Naive thymus-derived CD4-positive, alpha-beta T cell (primary cell): ENCODE measurements at regions of chr3 and their contacts with region 1.

Region 1: GRCh38 chr3:27914199-27914598 is 192.1 kb upstream of the EOMES start:
- DNase-seq: no peak
- ATAC-seq: no peak
- H3K4me3 ChIP-seq: no peak overlapping the region
- H3K4me3 Mint-ChIP-seq: no peak overlapping the region
- H3K27ac ChIP-seq: no peak overlapping the region
- H3K27ac Mint-ChIP-seq: peak overlapping the region in 1 of 9 donors; percentile 80
- H3K4me1 ChIP-seq: no peaks in the 10 kb centered on the region
- H3K4me1 Mint-ChIP-seq: peaks cover 3 to 18% (median 11%) of the 10 kb centered on the region in 7 donors
- H3K27me3 ChIP-seq: no peaks in the 10 kb centered on the region
- H3K27me3 Mint-ChIP-seq: no peaks in the 10 kb centered on the region

Region 2: GRCh38 chr3:27889745-27890144 is 24.5 kb before region 1 on chr3:
- CTCF ChIA-PET with region 1: no interaction called
- POLR2A ChIA-PET with region 1: no interaction called
- intact Hi-C with region 1: no loop called
- DNase-seq: no peak
- ATAC-seq: no peak
- H3K4me3 ChIP-seq: no peak overlapping the region
- H3K4me3 Mint-ChIP-seq: no peak overlapping the region
- H3K27ac ChIP-seq: no peak overlapping the region
- H3K27ac Mint-ChIP-seq: no peak overlapping the region
- H3K4me1 ChIP-seq: no peaks in the 10 kb centered on the region
- H3K4me1 Mint-ChIP-seq: peaks cover 0 to 19% (median 10%) of the 10 kb centered on the region in 7 donors
- H3K27me3 ChIP-seq: no peaks in the 10 kb centered on the region
- H3K27me3 Mint-ChIP-seq: peaks cover 0 to 21% (median 0%) of the 10 kb centered on the region in 5 donors

Region 3: DNA sequence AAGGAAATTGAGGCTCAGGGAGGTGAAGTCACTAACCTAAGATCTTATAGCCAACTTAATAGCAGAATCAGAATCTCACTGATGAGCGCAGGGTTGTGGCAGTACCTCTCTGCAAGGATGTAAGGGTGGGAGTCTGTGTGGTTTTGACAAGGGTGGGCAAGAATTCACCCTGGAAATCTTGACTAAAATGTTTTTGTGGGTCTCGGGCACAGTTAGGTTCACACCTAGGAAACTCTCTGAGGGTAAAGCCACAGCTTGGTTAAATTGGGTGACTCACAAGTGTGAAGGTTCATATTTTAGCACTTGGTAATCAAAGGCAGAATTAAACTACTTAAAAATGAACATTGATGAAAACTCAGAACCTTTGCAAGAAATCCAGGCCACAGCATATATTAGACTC is 13.9 kb before region 1 on chr3:
- CTCF ChIA-PET with region 1: no interaction called
- POLR2A ChIA-PET with region 1: interaction called, 3 read pairs
- intact Hi-C with region 1: loop called in 1 of 2 experiments (anchors 2 kb)
- DNase-seq: peak in 1 of 9 donors; percentile 25
- ATAC-seq: peak; percentile 63
- H3K4me3 ChIP-seq: no peak overlapping the region
- H3K4me3 Mint-ChIP-seq: peak overlapping the region in 2 of 10 donors; percentile 10 to 25
- H3K27ac ChIP-seq: no peak overlapping the region
- H3K27ac Mint-ChIP-seq: peak overlapping the region in 6 of 9 donors; percentile 2 to 76 (median 52)
- H3K4me1 ChIP-seq: peaks cover 24 to 37% of the 10 kb centered on the region in 2 donors
- H3K4me1 Mint-ChIP-seq: peaks cover 19 to 63% (median 49%) of the 10 kb centered on the region in 7 donors
- H3K27me3 ChIP-seq: no peaks in the 10 kb centered on the region
- H3K27me3 Mint-ChIP-seq: no peaks in the 10 kb centered on the region

Region 4: GRCh38 chr3:27943106-27943505 is 28.9 kb after region 1 on chr3:
- CTCF ChIA-PET with region 1: no interaction called
- POLR2A ChIA-PET with region 1: no interaction called
- intact Hi-C with region 1: no loop called
- DNase-seq: peak in 3 of 9 donors; percentile 2 to 12 (median 3)
- ATAC-seq: no peak
- H3K4me3 ChIP-seq: no peak overlapping the region
- H3K4me3 Mint-ChIP-seq: no peak overlapping the region
- H3K27ac ChIP-seq: no peak overlapping the region
- H3K27ac Mint-ChIP-seq: no peak overlapping the region
- H3K4me1 ChIP-seq: no peaks in the 10 kb centered on the region
- H3K4me1 Mint-ChIP-seq: peaks cover 0 to 12% (median 4%) of the 10 kb centered on the region in 7 donors
- H3K27me3 ChIP-seq: no peaks in the 10 kb centered on the region
- H3K27me3 Mint-ChIP-seq: no peaks in the 10 kb centered on the region

Region 5: GRCh38 chr3:27960133-27960532 is 45.9 kb after region 1 on chr3:
- CTCF ChIA-PET with region 1: no interaction called
- POLR2A ChIA-PET with region 1: no interaction called
- intact Hi-C with region 1: no loop called
- DNase-seq: no peak
- ATAC-seq: no peak
- H3K4me3 ChIP-seq: no peak overlapping the region
- H3K4me3 Mint-ChIP-seq: no peak overlapping the region
- H3K27ac ChIP-seq: no peak overlapping the region
- H3K27ac Mint-ChIP-seq: no peak overlapping the region
- H3K4me1 ChIP-seq: no peaks in the 10 kb centered on the region
- H3K4me1 Mint-ChIP-seq: peaks cover 0 to 7% (median 4%) of the 10 kb centered on the region in 7 donors
- H3K27me3 ChIP-seq: no peaks in the 10 kb centered on the region
- H3K27me3 Mint-ChIP-seq: no peaks in the 10 kb centered on the region